H1 (cell line): ENCODE measurements at regions of chr1 and their contacts with region 1.

Region 1: GRCh38 chr1:167066333-167067122 is 23.6 kb downstream of the GPA33 start:
- DNase-seq: peak; percentile 29 to 97
- H3K4me3 ChIP-seq: peak overlapping the region in 2 of 4 experiments; percentile 14 to 44; a peak in 4 of 8 replicates
- H3K27ac ChIP-seq: no peak overlapping the region
- H3K4me1 ChIP-seq: peaks cover 0 to 2% (median 0%) of the 10 kb centered on the region in 4 experiments; a peak in 1 of 7 replicates
- H3K27me3 ChIP-seq: no peaks in the 10 kb centered on the region
- CTCF ChIP-seq: peak; percentile 84 to 94 (median 93)
- EP300 ChIP-seq: no peak
- POLR2A ChIP-seq: no peak
- RAD21 ChIP-seq: peak; percentile 97 to 100

Region 2: GRCh38 chr1:166884040-166884642 is 182.4 kb before region 1 on chr1:
- CTCF ChIA-PET with region 1: interaction called, 305 read pairs
- POLR2A ChIA-PET with region 1: no interaction called
- DNase-seq: peak; percentile 66 to 91
- H3K4me3 ChIP-seq: peak overlapping the region; percentile 15 to 53 (median 24); a peak in 6 of 8 replicates
- H3K27ac ChIP-seq: no peak overlapping the region
- H3K4me1 ChIP-seq: 0 out of 7 replicates have a peak, but pooled peaks cover 0 to 3% (median 0%) of the 10 kb centered on the region in 4 experiments
- H3K27me3 ChIP-seq: peaks cover 1 to 14% (median 12%) of the 10 kb centered on the region in 4 experiments
- CTCF ChIP-seq: peak; percentile 94 to 96 (median 95)
- EP300 ChIP-seq: no peak
- POLR2A ChIP-seq: no peak
- RAD21 ChIP-seq: peak; percentile 95 to 96

Region 3: GRCh38 chr1:167207940-167208623 is 141.6 kb after region 1 on chr1:
- CTCF ChIA-PET with region 1: interaction called, 13 read pairs
- POLR2A ChIA-PET with region 1: no interaction called
- DNase-seq: no peak
- H3K4me3 ChIP-seq: no peak overlapping the region
- H3K27ac ChIP-seq: no peak overlapping the region
- H3K4me1 ChIP-seq: peaks cover 3 to 7% (median 6%) of the 10 kb centered on the region in 4 experiments; a peak in 6 of 7 replicates
- H3K27me3 ChIP-seq: no peaks in the 10 kb centered on the region
- CTCF ChIP-seq: peak in 2 of 3 experiments; percentile 31 to 40; a peak in 2 of 4 replicates
- EP300 ChIP-seq: no peak
- POLR2A ChIP-seq: no peak
- RAD21 ChIP-seq: peak; percentile 39 to 57